Mammary epithelial cell (primary cell): ENCODE measurements at regions of chr12 and their contacts with region 1.

Region 1: GRCh38 chr12:990661-991349 is at the start of gene ERC1:
- DNase-seq: peak; percentile 85
- H3K4me3 ChIP-seq: peak within 1 kb of the TSS; percentile 80 to 93 (median 90)
- H3K27ac ChIP-seq: peak within 1 kb of the TSS; percentile 92
- H3K4me1 ChIP-seq: peaks cover 25% of the 10 kb centered on the region
- H3K27me3 ChIP-seq: no peaks in the 10 kb centered on the region
- CTCF ChIP-seq: no peak
- total RNA-seq, gene ERC1: 41.0 to 88.7 TPM

Region 2: GRCh38 chr12:779745-780734 is 210.8 kb before region 1 on chr12:
- CTCF ChIA-PET with region 1: no interaction called
- dilution Hi-C with region 1: no loop called
- in situ Hi-C with region 1: no loop called
- intact Hi-C with region 1: no loop called
- DNase-seq: peak; percentile 40
- H3K4me3 ChIP-seq: no peak overlapping the region
- H3K27ac ChIP-seq: no peak overlapping the region
- H3K4me1 ChIP-seq: peaks cover 11% of the 10 kb centered on the region
- H3K27me3 ChIP-seq: no peaks in the 10 kb centered on the region
- CTCF ChIP-seq: no peak

Region 3: GRCh38 chr12:1013618-1014489 is 23.0 kb after region 1 on chr12:
- CTCF ChIA-PET with region 1: no interaction called
- dilution Hi-C with region 1: no loop called
- in situ Hi-C with region 1: no loop called
- intact Hi-C with region 1: loop called (anchors 2 kb)
- DNase-seq: peak; percentile 91
- H3K4me3 ChIP-seq: peak overlapping the region in 1 of 3 experiments; percentile 30
- H3K27ac ChIP-seq: peak overlapping the region; percentile 88
- H3K4me1 ChIP-seq: peaks cover 12% of the 10 kb centered on the region
- H3K27me3 ChIP-seq: no peaks in the 10 kb centered on the region
- CTCF ChIP-seq: no peak